ENCODE measurements at regions of chr15 and their contacts with region 1.

Region 1: GRCh38 chr15:64731012-64731806 is 44.2 kb downstream of the RBPMS2 start:
- DNase-seq: peak; percentile 91
- ATAC-seq: peak; percentile 78

Region 2: GRCh38 chr15:64667736-64668161 is 63.5 kb before region 1 on chr15:
- intact Hi-C with region 1: no loop called
- DNase-seq: no peak
- ATAC-seq: no peak

Region 3: DNA sequence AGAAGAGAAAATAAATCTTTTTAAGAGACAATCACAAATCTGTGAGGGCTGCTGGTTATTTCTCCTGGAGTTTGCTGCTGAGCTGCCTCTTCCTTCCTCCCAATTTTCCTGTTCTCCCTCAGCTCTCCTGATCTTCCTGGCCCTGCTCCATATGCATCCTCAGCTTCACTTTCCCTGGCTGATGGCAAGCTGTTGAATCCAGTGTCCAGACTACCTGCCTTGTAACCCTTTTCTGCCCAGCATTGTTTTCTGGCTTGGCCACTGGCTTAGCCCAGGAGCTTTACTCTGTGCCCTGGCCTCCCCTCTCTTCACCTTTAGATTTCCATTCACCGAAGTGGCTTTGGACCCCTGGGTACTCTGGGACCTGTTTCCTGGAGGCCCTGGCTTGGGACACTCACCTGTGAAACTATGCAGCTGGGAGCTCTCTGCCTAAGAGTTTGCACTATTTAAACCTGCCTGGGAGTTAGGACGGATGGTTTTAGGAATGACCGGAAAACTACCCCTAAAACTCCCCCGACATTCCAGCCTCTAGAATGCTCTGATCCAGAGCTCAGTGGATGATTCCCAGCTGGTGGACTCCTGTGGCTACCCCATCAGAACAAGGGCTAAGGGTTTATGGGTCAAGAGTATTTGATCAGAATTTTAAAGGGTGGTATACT is 45.9 kb before region 1 on chr15:
- intact Hi-C with region 1: loop called (anchors 2 kb)
- DNase-seq: no peak
- ATAC-seq: no peak

Region 4: DNA sequence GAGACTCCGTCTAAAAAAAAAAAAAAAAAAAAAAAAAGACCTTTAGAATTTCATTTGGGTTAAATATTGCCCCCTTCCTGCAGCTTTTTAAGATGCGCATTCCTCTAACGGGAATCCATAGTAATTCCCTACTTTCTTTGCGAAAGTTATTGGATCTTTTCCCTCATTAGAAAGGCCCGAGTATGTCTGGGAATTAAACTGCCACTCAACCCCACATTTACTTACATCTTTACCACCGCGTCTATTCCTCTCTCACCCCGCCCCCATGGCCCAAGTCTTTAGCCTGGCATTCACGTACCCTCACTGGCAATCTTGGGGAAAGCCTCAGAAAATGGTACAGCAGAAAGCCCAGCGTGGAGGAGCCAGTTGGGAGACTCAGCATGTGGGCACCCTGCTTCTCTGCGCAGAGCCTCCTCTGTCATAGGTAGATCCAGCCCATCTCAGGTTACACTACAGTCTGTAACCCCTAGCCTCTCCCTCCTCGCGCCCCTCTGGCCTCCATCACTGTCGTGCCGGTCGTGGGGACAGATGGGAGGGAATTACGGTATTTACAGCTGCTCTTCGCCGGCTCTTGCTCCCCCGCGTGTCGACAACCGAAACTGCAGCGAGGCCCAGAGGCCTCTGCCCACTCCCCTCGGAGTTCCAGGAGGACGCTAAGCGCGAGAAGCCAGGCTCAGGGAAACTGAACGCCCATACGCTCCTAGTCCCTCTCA is 174.1 kb after region 1 on chr15:
- intact Hi-C with region 1: loop called (anchors 10 kb)
- DNase-seq: peak; percentile 88
- ATAC-seq: peak; percentile 96

Measured in left ventricle myocardium superior (tissue), 1 donor.